ENCODE measurements at regions of chr6 and their contacts with region 1.

Region 1: DNA sequence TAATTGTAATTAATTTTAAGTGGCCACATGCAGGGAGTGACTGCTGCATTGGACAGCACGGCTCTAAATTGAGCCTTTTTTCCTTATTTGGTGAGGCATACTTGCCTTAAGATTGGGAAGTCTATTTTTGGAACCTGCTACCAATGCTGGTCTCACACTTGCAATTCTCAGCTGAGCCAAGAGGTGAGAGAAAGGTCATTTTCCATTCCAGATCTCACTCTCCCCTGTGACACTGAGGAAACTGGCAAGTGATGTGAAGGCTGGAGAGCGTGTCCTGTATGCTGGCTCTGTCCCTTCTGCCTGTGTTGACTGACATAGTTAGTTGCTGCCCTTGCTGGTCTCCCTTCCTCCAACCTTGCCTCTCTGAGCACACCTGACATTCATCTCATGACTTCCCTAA is 735 bp upstream of the MOG start:
- DNase-seq: no peak
- ATAC-seq: no peak
- H3K4me3 Mint-ChIP-seq: no peak overlapping the region
- H3K27ac Mint-ChIP-seq: peak overlapping the region; percentile 57; the same call in 1 of the 2 replicates
- H3K4me1 Mint-ChIP-seq: peaks cover 62% of the 10 kb centered on the region
- H3K27me3 Mint-ChIP-seq: no peaks in the 10 kb centered on the region
- CTCF ChIP-seq: no peak

Region 2: GRCh38 chr6:29676981-29677601 is 20.9 kb after region 1 on chr6:
- CTCF ChIA-PET with region 1: interaction called, 405 read pairs
- POLR2A ChIA-PET with region 1: interaction called, 16 read pairs
- DNase-seq: no peak
- ATAC-seq: peak; percentile 80
- H3K4me3 Mint-ChIP-seq: no peak overlapping the region
- H3K27ac Mint-ChIP-seq: peak overlapping the region; percentile 95
- H3K4me1 Mint-ChIP-seq: peaks cover 48% of the 10 kb centered on the region
- H3K27me3 Mint-ChIP-seq: peaks cover 15% of the 10 kb centered on the region
- CTCF ChIP-seq: no peak

Region 3: GRCh38 chr6:29989211-29989610 is 333.1 kb after region 1 on chr6:
- CTCF ChIA-PET with region 1: no interaction called
- POLR2A ChIA-PET with region 1: no interaction called
- DNase-seq: no peak
- ATAC-seq: no peak
- H3K4me3 Mint-ChIP-seq: no peak overlapping the region
- H3K27ac Mint-ChIP-seq: no peak overlapping the region
- H3K4me1 Mint-ChIP-seq: no peaks in the 10 kb centered on the region
- H3K27me3 Mint-ChIP-seq: peaks cover 13% of the 10 kb centered on the region
- CTCF ChIP-seq: no peak

Measured in WTC11 (cell line).